IMR-90 (cell line): ENCODE measurements at regions of chr10 and their contacts with region 1.

Region 1: DNA sequence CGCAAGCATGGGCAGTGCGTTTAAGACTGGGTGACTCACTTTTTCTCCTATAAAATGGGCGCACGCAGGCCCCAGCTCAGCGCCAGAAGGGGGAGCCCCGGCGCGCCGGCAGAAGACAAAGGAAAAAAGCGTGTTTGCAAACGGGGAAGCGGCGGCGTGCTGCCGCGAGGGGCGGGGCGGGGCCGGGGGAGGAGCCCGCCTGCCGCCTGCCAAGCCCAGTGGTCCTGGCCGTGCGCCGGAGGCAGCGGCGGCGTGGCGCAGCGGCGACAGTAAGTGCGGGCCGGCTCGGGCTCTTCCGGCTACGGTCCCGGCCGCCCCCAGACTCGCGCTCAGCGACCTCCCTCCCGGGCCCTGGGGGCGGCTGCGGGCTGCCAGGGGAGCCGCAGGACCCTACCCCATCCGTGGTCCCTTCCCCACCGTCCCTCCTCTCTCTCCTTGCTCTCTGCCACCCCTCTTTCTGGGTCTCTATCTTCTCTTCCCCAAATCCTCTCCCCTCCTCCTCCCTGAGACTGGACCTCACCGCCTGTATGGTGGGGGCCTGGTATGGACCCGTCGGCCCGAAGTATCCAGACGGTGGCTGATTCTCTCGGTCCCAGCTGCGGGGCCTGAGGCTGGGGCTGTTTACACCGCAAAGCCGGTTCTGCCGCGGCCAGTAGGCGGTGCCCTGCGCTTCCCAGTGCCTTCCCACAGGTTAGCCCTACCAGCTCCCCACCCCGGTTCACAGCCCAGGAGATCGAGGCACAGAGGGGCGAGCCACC is at the start of gene SLC29A3:
- DNase-seq: peak; percentile 70
- ATAC-seq: peak; percentile 92
- H3K4me3 ChIP-seq: peak within 1 kb of the TSS; percentile 68
- H3K27ac ChIP-seq: peak within 1 kb of the TSS; percentile 13; the same call in 1 of the 2 replicates
- H3K4me1 ChIP-seq: no peaks in the 10 kb centered on the region; the same call in 1 of the 2 replicates
- H3K27me3 ChIP-seq: peaks cover 2% of the 10 kb centered on the region; the same call in 1 of the 2 replicates
- CTCF ChIP-seq: peak; percentile 69
- POLR2A ChIP-seq: no peak
- RAD21 ChIP-seq: peak; percentile 64
- total RNA-seq, gene SLC29A3: 0.72 and 0.83 TPM in 2 replicates

Region 2: GRCh38 chr10:71370031-71370430 is 50.8 kb after region 1 on chr10:
- CTCF ChIA-PET with region 1: interaction called, 4 read pairs
- POLR2A ChIA-PET with region 1: interaction called, 15 read pairs
- dilution Hi-C with region 1: no loop called
- in situ Hi-C with region 1: no loop called
- intact Hi-C with region 1: loop called (anchors 5 kb)
- DNase-seq: no peak
- ATAC-seq: no peak
- H3K4me3 ChIP-seq: no peak overlapping the region
- H3K27ac ChIP-seq: no peak overlapping the region
- H3K4me1 ChIP-seq: no peaks in the 10 kb centered on the region
- H3K27me3 ChIP-seq: peaks cover 41% of the 10 kb centered on the region
- CTCF ChIP-seq: no peak
- POLR2A ChIP-seq: no peak
- RAD21 ChIP-seq: no peak

Region 3: GRCh38 chr10:71569775-71570588 is 250.8 kb after region 1 on chr10:
- CTCF ChIA-PET with region 1: interaction called, 11 read pairs
- POLR2A ChIA-PET with region 1: no interaction called
- dilution Hi-C with region 1: no loop called
- in situ Hi-C with region 1: loop called (anchors 5 kb)
- intact Hi-C with region 1: loop called (anchors 1 kb)
- DNase-seq: peak; percentile 23
- ATAC-seq: peak; percentile 77
- H3K4me3 ChIP-seq: no peak overlapping the region
- H3K27ac ChIP-seq: no peak overlapping the region
- H3K4me1 ChIP-seq: no peaks in the 10 kb centered on the region
- H3K27me3 ChIP-seq: peaks cover 31% of the 10 kb centered on the region
- CTCF ChIP-seq: peak; percentile 68
- POLR2A ChIP-seq: no peak
- RAD21 ChIP-seq: peak; percentile 65

Region 4: GRCh38 chr10:71812016-71812912 is 493.0 kb after region 1 on chr10:
- CTCF ChIA-PET with region 1: no interaction called
- POLR2A ChIA-PET with region 1: no interaction called
- dilution Hi-C with region 1: no loop called
- in situ Hi-C with region 1: loop called (anchors 10 kb)
- intact Hi-C with region 1: loop called (anchors 1 kb)
- DNase-seq: peak; percentile 34
- ATAC-seq: peak; percentile 91
- H3K4me3 ChIP-seq: no peak overlapping the region
- H3K27ac ChIP-seq: no peak overlapping the region
- H3K4me1 ChIP-seq: no peaks in the 10 kb centered on the region
- H3K27me3 ChIP-seq: peaks cover 4% of the 10 kb centered on the region; the same call in 1 of the 2 replicates
- CTCF ChIP-seq: peak; percentile 87
- POLR2A ChIP-seq: no peak
- RAD21 ChIP-seq: peak; percentile 91

Region 5: GRCh38 chr10:72048450-72049124 is 729.4 kb after region 1 on chr10:
- CTCF ChIA-PET with region 1: no interaction called
- POLR2A ChIA-PET with region 1: no interaction called
- dilution Hi-C with region 1: no loop called
- in situ Hi-C with region 1: no loop called
- intact Hi-C with region 1: loop called (anchors 10 kb)
- DNase-seq: peak; percentile 90
- ATAC-seq: peak; percentile 96
- H3K4me3 ChIP-seq: no peak overlapping the region
- H3K27ac ChIP-seq: no peak overlapping the region
- H3K4me1 ChIP-seq: peaks cover 1% of the 10 kb centered on the region; the same call in 1 of the 2 replicates
- H3K27me3 ChIP-seq: peaks cover 16% of the 10 kb centered on the region
- CTCF ChIP-seq: peak; percentile 100
- POLR2A ChIP-seq: 0 out of 2 replicates have a peak, but pooled peaks have one; percentile 31
- RAD21 ChIP-seq: peak; percentile 100